ENCODE measurements at regions of chr3 and their contacts with region 1.

Region 1: DNA sequence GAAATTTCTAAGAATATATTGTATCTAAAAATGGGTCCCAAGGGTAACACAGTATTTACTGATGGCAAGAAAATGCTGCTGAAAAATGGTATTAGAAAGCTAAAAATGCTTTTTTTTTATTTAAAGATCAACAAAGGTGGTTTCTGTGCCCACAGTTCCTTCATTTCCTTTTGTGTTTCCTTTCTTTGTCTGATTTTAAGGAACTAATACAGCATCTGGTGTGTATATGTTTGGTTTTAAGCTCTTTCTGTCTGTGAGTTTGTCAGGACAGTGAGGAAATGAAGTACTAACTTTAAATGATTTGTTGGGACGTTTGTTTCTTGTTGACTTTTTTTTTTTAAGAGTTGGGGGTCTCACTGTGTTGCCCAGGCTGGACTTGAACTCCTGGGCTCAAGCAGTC is 38.2 kb downstream of the RASA2 start:
- DNase-seq: no peak
- H3K4me3 Mint-ChIP-seq: no peak overlapping the region
- H3K27ac Mint-ChIP-seq: no peak overlapping the region
- H3K4me1 Mint-ChIP-seq: peaks cover 54% of the 10 kb centered on the region
- H3K27me3 Mint-ChIP-seq: no peaks in the 10 kb centered on the region

Region 2: DNA sequence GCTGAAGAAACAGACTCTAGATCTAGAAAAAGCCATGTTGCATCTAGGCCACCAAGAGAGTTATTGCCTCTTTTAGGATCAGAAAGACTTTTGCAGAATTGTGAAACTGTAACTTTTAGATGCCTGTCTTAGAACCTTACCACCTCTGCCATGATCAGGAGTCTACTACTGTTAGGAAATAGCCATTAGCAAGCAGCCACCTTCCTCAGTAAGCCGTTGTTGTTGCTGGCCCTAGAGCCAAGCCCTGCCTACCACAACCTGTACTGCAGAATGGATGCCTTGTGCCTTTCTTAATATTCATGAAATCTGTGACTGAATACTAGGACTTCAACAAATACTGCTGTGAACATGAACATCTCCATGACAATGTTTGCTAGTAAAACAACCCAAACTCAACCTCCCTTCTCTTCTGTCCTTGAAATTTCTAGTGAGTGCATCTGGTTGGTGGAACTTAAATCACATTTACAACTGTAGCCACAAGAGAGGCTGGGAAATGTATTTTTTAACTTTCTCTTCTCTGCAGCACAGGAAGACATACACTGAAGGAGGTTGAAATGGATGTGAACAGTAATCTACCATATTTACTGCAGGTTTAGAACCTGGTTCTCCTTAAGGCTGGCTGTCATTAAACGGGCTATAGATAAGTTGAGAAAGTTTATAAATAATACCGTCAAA is 17.5 kb before region 1 on chr3:
- intact Hi-C with region 1: loop called (anchors 1 kb)
- DNase-seq: no peak
- H3K4me3 Mint-ChIP-seq: no peak overlapping the region
- H3K27ac Mint-ChIP-seq: no peak overlapping the region
- H3K4me1 Mint-ChIP-seq: peaks cover 38% of the 10 kb centered on the region
- H3K27me3 Mint-ChIP-seq: no peaks in the 10 kb centered on the region

Region 3: DNA sequence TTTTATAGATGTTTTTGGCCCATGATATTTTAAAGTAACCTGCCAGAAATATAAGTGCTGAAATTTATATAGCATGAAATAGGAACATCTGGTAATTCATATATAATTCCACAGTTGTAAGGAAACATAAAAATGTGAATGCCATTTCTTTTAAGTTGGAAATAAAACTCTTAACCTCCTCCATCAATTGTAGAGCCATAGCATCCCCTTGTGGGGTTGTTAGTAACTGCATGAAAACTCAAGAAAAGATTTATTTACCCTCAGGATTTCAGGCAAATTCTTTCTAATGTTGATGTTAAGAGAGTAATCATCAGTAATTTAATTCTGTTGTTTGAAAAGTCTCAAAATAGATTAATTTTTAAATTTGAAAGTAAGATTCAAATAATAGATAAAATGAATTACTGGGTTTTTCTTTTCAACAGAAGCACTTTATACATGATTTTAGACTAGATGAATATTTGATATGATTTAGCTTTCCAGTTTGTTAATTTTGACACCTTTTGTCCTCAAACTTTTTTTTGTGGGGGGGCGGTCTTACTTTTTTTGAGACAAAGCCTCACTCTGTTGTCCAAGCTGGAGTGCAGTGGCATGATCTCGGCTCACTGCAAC is 36.5 kb after region 1 on chr3:
- intact Hi-C with region 1: no loop called
- DNase-seq: peak; percentile 17
- H3K4me3 Mint-ChIP-seq: no peak overlapping the region
- H3K27ac Mint-ChIP-seq: peak overlapping the region; percentile 61
- H3K4me1 Mint-ChIP-seq: peaks cover 24% of the 10 kb centered on the region
- H3K27me3 Mint-ChIP-seq: no peaks in the 10 kb centered on the region

Region 4: GRCh38 chr3:142013326-142013980 is 488.5 kb after region 1 on chr3:
- intact Hi-C with region 1: no loop called
- DNase-seq: no peak
- H3K4me3 Mint-ChIP-seq: no peak overlapping the region
- H3K27ac Mint-ChIP-seq: no peak overlapping the region
- H3K4me1 Mint-ChIP-seq: no peaks in the 10 kb centered on the region
- H3K27me3 Mint-ChIP-seq: no peaks in the 10 kb centered on the region

Measured in activated T-helper 1 cell treated with anti-CD3 and anti-CD28 coated beads, Interleukin-12 subunit alpha, Interleukin-12 subunit beta, Interleukin-2, Interleukin-4 antibody, amounts not matched to agents 30 ng/mL and 10 ng/mL and 1 ng/mL, durations not matched to agents 14 hours and 24 hours and 36 hours (primary cell).